CD8-positive, alpha-beta T cell (primary cell): ENCODE measurements at regions of chr20 and their contacts with region 1.

Region 1: GRCh38 chr20:51541189-51542032 is 1.1 kb downstream of the NFATC2 start:
- DNase-seq: peak; percentile 63 to 96 (median 81)
- ATAC-seq: peak; percentile 76
- H3K4me3 ChIP-seq: peak overlapping the region; percentile 57 to 82
- H3K4me3 Mint-ChIP-seq: peak overlapping the region; percentile 97
- H3K27ac ChIP-seq: peak overlapping the region; percentile 76 to 92
- H3K27ac Mint-ChIP-seq: peak overlapping the region; percentile 99
- H3K4me1 ChIP-seq: peaks cover 52% of the 10 kb centered on the region
- H3K4me1 Mint-ChIP-seq: peaks cover 57% of the 10 kb centered on the region
- H3K27me3 ChIP-seq: no peaks in the 10 kb centered on the region
- H3K27me3 Mint-ChIP-seq: no peaks in the 10 kb centered on the region
- CTCF ChIP-seq: no peak

Region 2: GRCh38 chr20:51404298-51405060 is 136.9 kb before region 1 on chr20:
- CTCF ChIA-PET with region 1: interaction called, 4 read pairs
- POLR2A ChIA-PET with region 1: interaction called, 5 read pairs
- intact Hi-C with region 1: loop called (anchors 5 kb)
- DNase-seq: peak; percentile 71 to 96 (median 84)
- ATAC-seq: peak; percentile 73
- H3K4me3 ChIP-seq: no peak overlapping the region
- H3K4me3 Mint-ChIP-seq: no peak overlapping the region
- H3K27ac ChIP-seq: peak overlapping the region; percentile 62 to 99
- H3K27ac Mint-ChIP-seq: peak overlapping the region; percentile 99
- H3K4me1 ChIP-seq: peaks cover 61% of the 10 kb centered on the region
- H3K4me1 Mint-ChIP-seq: peaks cover 76% of the 10 kb centered on the region
- H3K27me3 ChIP-seq: no peaks in the 10 kb centered on the region
- H3K27me3 Mint-ChIP-seq: no peaks in the 10 kb centered on the region
- CTCF ChIP-seq: no peak

Region 3: DNA sequence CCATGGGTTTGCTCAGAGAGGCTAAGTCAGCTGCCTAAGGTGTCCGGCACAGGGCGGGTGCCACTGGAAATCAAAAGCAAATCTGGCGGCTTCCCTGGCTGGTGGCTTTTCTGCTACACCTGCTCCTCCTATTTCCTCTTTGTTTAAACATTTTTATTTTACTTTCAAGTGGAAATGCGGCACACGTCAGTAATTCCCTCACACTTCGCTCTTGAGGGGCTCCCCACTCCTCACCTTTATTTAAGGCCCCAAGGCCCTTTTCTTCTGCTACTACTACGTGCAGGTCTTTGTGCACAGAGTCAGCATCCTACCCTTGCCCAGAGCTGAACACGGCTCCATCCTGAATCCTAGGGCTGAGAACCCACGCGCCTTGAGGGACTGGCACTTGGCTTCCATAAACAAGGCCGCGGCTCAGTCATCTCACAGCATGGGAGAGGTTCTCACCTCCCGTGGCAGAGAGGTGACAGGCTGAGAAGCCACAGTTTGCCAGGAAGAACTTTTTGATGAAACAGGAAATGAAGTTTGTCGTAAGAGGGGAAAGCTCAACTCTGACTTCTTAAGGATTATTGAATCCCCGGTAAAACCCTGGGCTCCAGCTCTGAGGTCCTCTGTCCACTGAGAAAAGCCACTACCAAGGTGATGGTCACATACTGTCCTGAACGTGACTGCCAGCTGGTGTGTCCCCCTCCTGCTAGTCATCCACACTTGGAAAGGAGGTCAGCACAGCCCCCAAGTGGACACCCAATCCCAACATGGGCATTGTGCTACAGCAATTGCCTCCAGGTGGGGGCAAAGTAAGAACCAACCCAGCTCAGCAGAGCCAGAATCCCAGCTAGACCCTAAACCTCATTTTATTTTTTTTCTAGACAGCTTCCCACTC is 46.9 kb before region 1 on chr20:
- CTCF ChIA-PET with region 1: interaction called, 11 read pairs
- POLR2A ChIA-PET with region 1: interaction called, 5 read pairs
- intact Hi-C with region 1: no loop called
- DNase-seq: peak in 6 of 9 experiments; percentile 46 to 86 (median 66)
- ATAC-seq: peak; percentile 49
- H3K4me3 ChIP-seq: peak overlapping the region; percentile 16 to 19
- H3K4me3 Mint-ChIP-seq: peak overlapping the region; percentile 64
- H3K27ac ChIP-seq: peak overlapping the region; percentile 43 to 86
- H3K27ac Mint-ChIP-seq: peak overlapping the region; percentile 91
- H3K4me1 ChIP-seq: peaks cover 80% of the 10 kb centered on the region
- H3K4me1 Mint-ChIP-seq: peaks cover 92% of the 10 kb centered on the region
- H3K27me3 ChIP-seq: no peaks in the 10 kb centered on the region
- H3K27me3 Mint-ChIP-seq: no peaks in the 10 kb centered on the region
- CTCF ChIP-seq: no peak

Region 4: DNA sequence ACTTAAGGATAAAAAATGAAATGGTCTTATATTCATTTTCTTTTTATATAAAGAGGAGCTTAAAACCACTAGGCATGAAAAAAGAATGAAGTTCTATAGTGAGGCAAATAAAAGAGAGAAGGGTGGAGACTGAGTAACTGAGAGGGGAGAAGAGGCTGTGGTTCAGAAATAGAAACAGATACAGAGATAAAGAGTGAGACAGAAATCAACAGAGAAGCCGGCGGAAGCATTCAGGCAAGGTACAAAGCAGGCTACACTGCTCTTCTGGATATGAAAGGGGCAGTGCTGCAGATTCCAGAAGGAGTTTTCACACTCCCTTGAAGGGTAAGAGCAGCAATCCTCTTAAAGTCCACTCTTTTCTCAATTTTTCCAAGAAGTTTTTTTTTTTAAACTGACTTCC is 28.8 kb before region 1 on chr20:
- CTCF ChIA-PET with region 1: interaction called, 6 read pairs
- POLR2A ChIA-PET with region 1: interaction called, 10 read pairs
- intact Hi-C with region 1: no loop called
- DNase-seq: peak in 2 of 9 experiments; percentile 39 to 56
- ATAC-seq: peak; percentile 75
- H3K4me3 ChIP-seq: no peak overlapping the region
- H3K4me3 Mint-ChIP-seq: peak overlapping the region; percentile 13
- H3K27ac ChIP-seq: peak overlapping the region in 1 of 2 experiments; percentile 63
- H3K27ac Mint-ChIP-seq: peak overlapping the region; percentile 89
- H3K4me1 ChIP-seq: peaks cover 55% of the 10 kb centered on the region
- H3K4me1 Mint-ChIP-seq: peaks cover 70% of the 10 kb centered on the region
- H3K27me3 ChIP-seq: no peaks in the 10 kb centered on the region
- H3K27me3 Mint-ChIP-seq: no peaks in the 10 kb centered on the region
- CTCF ChIP-seq: no peak

Region 5: DNA sequence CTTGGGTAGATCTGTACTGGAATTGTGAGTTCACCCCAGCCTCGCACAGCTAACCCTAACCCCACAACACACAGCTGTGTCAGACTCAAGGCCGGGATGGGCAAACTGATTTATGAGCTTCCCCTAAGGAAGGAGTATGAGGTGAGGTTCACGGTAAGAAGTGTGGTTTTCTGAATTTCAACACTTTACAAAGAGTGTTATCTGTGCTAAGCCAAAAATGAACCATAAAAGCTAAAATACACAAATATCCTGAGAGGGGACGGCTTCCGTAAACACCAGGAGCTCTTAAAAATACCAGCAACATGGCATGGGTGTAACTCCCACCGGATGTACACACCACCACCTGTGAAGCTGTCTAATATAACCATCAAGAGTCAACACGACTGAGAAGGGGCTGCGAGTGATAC is 125.6 kb after region 1 on chr20:
- CTCF ChIA-PET with region 1: no interaction called
- POLR2A ChIA-PET with region 1: no interaction called
- intact Hi-C with region 1: no loop called
- DNase-seq: peak in 6 of 9 experiments; percentile 10 to 70 (median 34)
- ATAC-seq: peak; percentile 58
- H3K4me3 ChIP-seq: no peak overlapping the region
- H3K4me3 Mint-ChIP-seq: peak overlapping the region; percentile 7
- H3K27ac ChIP-seq: peak overlapping the region in 1 of 2 experiments; percentile 43
- H3K27ac Mint-ChIP-seq: peak overlapping the region; percentile 55
- H3K4me1 ChIP-seq: peaks cover 7% of the 10 kb centered on the region
- H3K4me1 Mint-ChIP-seq: peaks cover 13% of the 10 kb centered on the region
- H3K27me3 ChIP-seq: no peaks in the 10 kb centered on the region
- H3K27me3 Mint-ChIP-seq: no peaks in the 10 kb centered on the region
- CTCF ChIP-seq: no peak